Panc1 (cell line): ENCODE measurements at regions of chr17 and their contacts with region 1.

Region 1: GRCh38 chr17:61519754-61520440 is 67.7 kb downstream of the TBX4 start:
- DNase-seq: no peak
- ATAC-seq: no peak
- H3K4me3 ChIP-seq: no peak overlapping the region
- H3K27ac ChIP-seq: no peak overlapping the region
- H3K4me1 ChIP-seq: no peaks in the 10 kb centered on the region
- H3K27me3 ChIP-seq: no peaks in the 10 kb centered on the region
- CTCF ChIP-seq: no peak

Region 2: DNA sequence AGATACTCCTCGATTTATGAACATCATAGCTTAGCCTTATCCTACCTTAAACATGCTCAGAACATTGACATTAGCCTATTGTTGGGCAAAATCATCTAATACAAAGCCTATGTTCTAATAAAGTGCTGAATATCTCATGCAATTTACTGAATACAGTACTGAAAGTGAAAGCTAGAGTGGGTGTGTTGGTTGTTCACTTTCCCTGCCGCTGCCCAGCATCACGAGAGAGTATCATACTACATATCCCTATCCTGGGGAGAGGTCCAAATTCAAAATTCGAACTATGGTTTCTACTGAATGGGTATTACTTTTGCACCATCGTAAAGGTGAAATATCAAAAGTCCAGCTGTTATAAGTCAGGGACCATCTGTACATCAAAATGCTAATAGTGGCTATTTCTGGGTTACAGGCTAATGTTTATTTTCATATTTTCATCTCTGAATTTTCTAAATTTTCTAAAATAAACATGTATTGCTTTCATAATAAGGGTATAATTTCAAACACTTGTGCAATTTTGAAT is 16.6 kb after region 1 on chr17:
- CTCF ChIA-PET with region 1: interaction called, 7 read pairs
- POLR2A ChIA-PET with region 1: no interaction called
- in situ Hi-C with region 1: no loop called
- intact Hi-C with region 1: loop called (anchors 1 kb)
- DNase-seq: no peak
- ATAC-seq: peak; percentile 66; the same call in 1 of the 2 replicates
- H3K4me3 ChIP-seq: peak overlapping the region; percentile 19 to 27
- H3K27ac ChIP-seq: peak overlapping the region; percentile 39; the same call in 1 of the 2 replicates
- H3K4me1 ChIP-seq: no peaks in the 10 kb centered on the region
- H3K27me3 ChIP-seq: no peaks in the 10 kb centered on the region
- CTCF ChIP-seq: no peak